ENCODE measurements at regions of chr19 and their contacts with region 1.

Region 1: GRCh38 chr19:48899781-48900476 is at the start of gene NUCB1:
- DNase-seq: peak; percentile 100
- ATAC-seq: peak; percentile 97
- total RNA-seq, gene NUCB1: 262 TPM

Region 2: GRCh38 chr19:48819366-48819816 is 80.5 kb before region 1 on chr19:
- intact Hi-C with region 1: no loop called
- DNase-seq: peak; percentile 86
- ATAC-seq: peak; percentile 93

Region 3: DNA sequence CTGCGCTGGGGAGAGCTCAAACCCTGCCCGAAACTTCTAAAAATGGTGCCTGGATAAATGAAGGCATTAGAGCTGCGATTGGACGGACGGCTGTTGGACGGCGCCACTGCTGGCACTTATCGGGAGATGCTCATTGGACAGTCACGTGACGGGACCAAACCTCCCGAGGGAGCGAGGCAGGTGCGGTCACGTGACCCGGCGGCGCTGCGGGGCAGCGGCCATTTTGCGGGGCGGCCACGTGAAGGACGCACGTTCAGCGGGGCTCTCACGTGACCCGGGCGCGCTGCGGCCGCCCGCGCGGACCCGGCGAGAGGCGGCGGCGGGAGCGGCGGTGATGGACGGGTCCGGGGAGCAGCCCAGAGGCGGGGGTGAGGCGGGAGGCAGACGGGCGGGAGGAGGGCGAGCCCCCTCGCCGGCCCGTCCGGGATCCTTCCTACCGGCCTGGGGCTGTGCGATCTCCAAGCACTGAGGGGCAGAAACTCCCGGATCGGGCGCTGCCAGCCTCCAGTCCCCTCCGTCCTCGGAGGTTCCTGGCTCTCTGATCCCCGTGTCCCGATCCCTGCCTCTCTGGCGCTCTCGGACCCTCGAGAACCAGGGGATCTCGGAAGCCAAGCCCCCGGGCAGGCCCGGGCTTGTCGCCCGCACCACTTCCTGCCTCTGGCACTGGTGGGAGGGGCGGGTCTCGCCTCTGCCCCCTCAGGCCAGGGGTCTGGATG is 54.8 kb after region 1 on chr19 and contains the start of gene BAX:
- intact Hi-C with region 1: loop called (anchors 10 kb)
- DNase-seq: peak; percentile 98
- ATAC-seq: peak; percentile 94
- total RNA-seq, gene BAX: 48.0 TPM